ENCODE measurements at regions of chr20 and their contacts with region 1.

Region 1: GRCh38 chr20:58481481-58482021 is 33.6 kb downstream of the APCDD1L start:
- DNase-seq: peak; percentile 46
- H3K4me3 ChIP-seq: no peak overlapping the region
- H3K27ac ChIP-seq: no peak overlapping the region
- H3K4me1 ChIP-seq: peaks cover 4% of the 10 kb centered on the region
- H3K27me3 ChIP-seq: no peaks in the 10 kb centered on the region
- CTCF ChIP-seq: peak; percentile 74 to 88
- POLR2A ChIP-seq: no peak

Region 2: GRCh38 chr20:58236612-58237330 is 244.8 kb before region 1 on chr20:
- CTCF ChIA-PET with region 1: no interaction called
- POLR2A ChIA-PET with region 1: no interaction called
- dilution Hi-C with region 1: no loop called
- intact Hi-C with region 1: no loop called
- DNase-seq: peak; percentile 66
- H3K4me3 ChIP-seq: peak overlapping the region; percentile 39 to 84 (median 83)
- H3K27ac ChIP-seq: peak overlapping the region; percentile 28
- H3K4me1 ChIP-seq: peaks cover 13% of the 10 kb centered on the region
- H3K27me3 ChIP-seq: no peaks in the 10 kb centered on the region
- CTCF ChIP-seq: peak; percentile 94 to 98
- POLR2A ChIP-seq: peak; percentile 16

Region 3: DNA sequence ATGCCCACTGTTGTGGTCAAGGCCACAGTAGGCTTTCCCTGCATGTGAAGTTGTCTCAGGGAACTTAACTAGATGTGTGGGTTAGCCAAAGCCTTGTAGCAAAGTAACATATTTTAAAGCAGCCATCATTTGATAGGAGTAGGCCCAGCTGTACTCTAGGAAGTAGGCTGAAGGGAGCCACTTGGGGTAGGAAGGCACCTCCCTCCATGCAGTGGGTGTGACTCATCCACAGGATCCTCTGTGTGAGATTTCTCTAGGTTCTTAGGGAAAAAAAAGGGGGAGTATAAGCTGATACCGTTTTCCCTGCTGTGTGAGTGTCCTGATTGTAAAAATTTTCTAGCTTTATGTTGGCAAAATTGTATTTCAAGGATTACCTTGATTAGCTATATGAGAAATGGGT is 47.8 kb before region 1 on chr20:
- CTCF ChIA-PET with region 1: no interaction called
- POLR2A ChIA-PET with region 1: no interaction called
- dilution Hi-C with region 1: no loop called
- intact Hi-C with region 1: no loop called
- DNase-seq: peak; percentile 12
- H3K4me3 ChIP-seq: no peak overlapping the region
- H3K27ac ChIP-seq: no peak overlapping the region
- H3K4me1 ChIP-seq: peaks cover 6% of the 10 kb centered on the region
- H3K27me3 ChIP-seq: no peaks in the 10 kb centered on the region
- CTCF ChIP-seq: no peak
- POLR2A ChIP-seq: no peak

Region 4: GRCh38 chr20:58515233-58516184 is 34.0 kb after region 1 on chr20 and contains the start of gene APCDD1L:
- CTCF ChIA-PET with region 1: no interaction called
- POLR2A ChIA-PET with region 1: no interaction called
- dilution Hi-C with region 1: no loop called
- intact Hi-C with region 1: no loop called
- DNase-seq: no peak
- H3K4me3 ChIP-seq: peak within 1 kb of the TSS in 1 of 3 experiments; percentile 16
- H3K27ac ChIP-seq: no peak within 1 kb of the TSS
- H3K4me1 ChIP-seq: peaks cover 3% of the 10 kb centered on the region
- H3K27me3 ChIP-seq: peaks cover 25 to 30% of the 10 kb centered on the region in 2 experiments
- CTCF ChIP-seq: no peak
- POLR2A ChIP-seq: no peak
- total RNA-seq, gene APCDD1L: 0.88 and 1.4 TPM in 2 replicates

Region 5: GRCh38 chr20:58659841-58660240 is 178.3 kb after region 1 on chr20:
- CTCF ChIA-PET with region 1: interaction called, 35 read pairs
- POLR2A ChIA-PET with region 1: no interaction called
- dilution Hi-C with region 1: no loop called
- intact Hi-C with region 1: no loop called
- DNase-seq: no peak
- H3K4me3 ChIP-seq: no peak overlapping the region
- H3K27ac ChIP-seq: no peak overlapping the region
- H3K4me1 ChIP-seq: peaks cover 51% of the 10 kb centered on the region
- H3K27me3 ChIP-seq: no peaks in the 10 kb centered on the region
- CTCF ChIP-seq: no peak
- POLR2A ChIP-seq: no peak

Region 6: GRCh38 chr20:58703264-58703663 is 221.7 kb after region 1 on chr20:
- CTCF ChIA-PET with region 1: interaction called, 22 read pairs
- POLR2A ChIA-PET with region 1: no interaction called
- dilution Hi-C with region 1: no loop called
- intact Hi-C with region 1: no loop called
- DNase-seq: no peak
- H3K4me3 ChIP-seq: no peak overlapping the region
- H3K27ac ChIP-seq: no peak overlapping the region
- H3K4me1 ChIP-seq: no peaks in the 10 kb centered on the region
- H3K27me3 ChIP-seq: no peaks in the 10 kb centered on the region
- CTCF ChIP-seq: peak; percentile 9 to 15
- POLR2A ChIP-seq: no peak

Region 7: GRCh38 chr20:58850693-58851174 is 369.2 kb after region 1 on chr20 and contains the start of gene GNAS-AS1:
- CTCF ChIA-PET with region 1: interaction called, 67 read pairs
- POLR2A ChIA-PET with region 1: no interaction called
- dilution Hi-C with region 1: no loop called
- intact Hi-C with region 1: loop called (anchors 1 kb)
- DNase-seq: no peak
- H3K4me3 ChIP-seq: no peak within 1 kb of the TSS
- H3K27ac ChIP-seq: no peak within 1 kb of the TSS
- H3K4me1 ChIP-seq: no peaks in the 10 kb centered on the region
- H3K27me3 ChIP-seq: peaks cover 44 to 46% of the 10 kb centered on the region in 2 experiments
- CTCF ChIP-seq: no peak
- POLR2A ChIP-seq: no peak
- total RNA-seq, gene GNAS-AS1: 0.58 and 0.74 TPM in 2 replicates